SK-N-SH (cell line): ENCODE measurements at regions of chr7 and their contacts with region 1.

Region 1: DNA sequence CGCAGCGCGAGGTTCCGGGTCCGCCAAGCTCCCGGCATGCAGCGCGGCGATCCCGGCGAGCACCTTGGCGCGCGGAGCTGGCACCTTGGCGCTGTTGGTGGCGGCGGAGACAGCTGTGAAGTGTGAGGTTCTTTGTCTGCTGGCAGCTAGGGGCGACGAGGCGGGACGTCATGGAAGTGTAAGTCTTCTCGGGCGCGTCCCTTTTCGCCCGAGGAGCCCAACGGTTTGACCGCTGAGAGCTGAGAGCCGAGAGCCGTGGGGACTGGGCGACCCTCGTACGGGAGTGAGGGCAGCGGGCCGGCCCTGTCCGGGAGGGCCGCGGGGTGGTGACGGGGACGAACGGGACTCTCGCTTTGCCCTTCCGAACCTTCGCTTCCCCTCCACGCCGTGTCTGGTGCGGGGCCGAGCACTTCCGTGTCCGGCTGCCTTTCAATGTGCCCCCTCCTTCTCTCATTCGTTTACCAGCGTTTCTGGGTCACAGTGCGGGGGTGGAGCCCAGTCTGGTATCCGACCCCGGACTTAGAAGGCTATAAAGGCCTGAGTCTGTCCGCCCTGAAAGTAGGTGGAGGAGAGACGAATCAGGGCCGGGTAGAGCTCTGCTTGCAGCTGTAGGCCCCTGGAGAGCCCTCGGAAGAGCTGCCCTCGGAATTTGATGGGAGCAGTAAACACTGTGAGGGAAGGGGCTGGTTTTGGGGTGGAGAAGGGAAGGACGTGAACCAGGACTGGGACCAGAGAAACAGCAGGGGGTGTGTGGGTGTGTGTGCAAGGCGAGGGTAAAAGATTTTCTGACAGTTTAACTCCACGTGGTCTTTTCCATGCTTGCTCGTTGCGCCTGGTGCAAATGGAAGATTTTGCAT is at the start of gene CRCP:
- DNase-seq: peak; percentile 95
- H3K4me3 ChIP-seq: peak within 1 kb of the TSS; percentile 64 to 80
- H3K27ac ChIP-seq: peak within 1 kb of the TSS; percentile 88 to 93
- H3K4me1 ChIP-seq: peaks cover 18 to 21% of the 10 kb centered on the region in 2 experiments; a peak in 2 of 4 replicates
- H3K27me3 ChIP-seq: no peaks in the 10 kb centered on the region
- CTCF ChIP-seq: peak; percentile 62
- EP300 ChIP-seq: no peak
- RAD21 ChIP-seq: peak; percentile 42; the same call in 1 of the 2 replicates
- polyA plus RNA-seq, gene CRCP: 34.0 and 34.1 TPM in 2 replicates

Region 2: DNA sequence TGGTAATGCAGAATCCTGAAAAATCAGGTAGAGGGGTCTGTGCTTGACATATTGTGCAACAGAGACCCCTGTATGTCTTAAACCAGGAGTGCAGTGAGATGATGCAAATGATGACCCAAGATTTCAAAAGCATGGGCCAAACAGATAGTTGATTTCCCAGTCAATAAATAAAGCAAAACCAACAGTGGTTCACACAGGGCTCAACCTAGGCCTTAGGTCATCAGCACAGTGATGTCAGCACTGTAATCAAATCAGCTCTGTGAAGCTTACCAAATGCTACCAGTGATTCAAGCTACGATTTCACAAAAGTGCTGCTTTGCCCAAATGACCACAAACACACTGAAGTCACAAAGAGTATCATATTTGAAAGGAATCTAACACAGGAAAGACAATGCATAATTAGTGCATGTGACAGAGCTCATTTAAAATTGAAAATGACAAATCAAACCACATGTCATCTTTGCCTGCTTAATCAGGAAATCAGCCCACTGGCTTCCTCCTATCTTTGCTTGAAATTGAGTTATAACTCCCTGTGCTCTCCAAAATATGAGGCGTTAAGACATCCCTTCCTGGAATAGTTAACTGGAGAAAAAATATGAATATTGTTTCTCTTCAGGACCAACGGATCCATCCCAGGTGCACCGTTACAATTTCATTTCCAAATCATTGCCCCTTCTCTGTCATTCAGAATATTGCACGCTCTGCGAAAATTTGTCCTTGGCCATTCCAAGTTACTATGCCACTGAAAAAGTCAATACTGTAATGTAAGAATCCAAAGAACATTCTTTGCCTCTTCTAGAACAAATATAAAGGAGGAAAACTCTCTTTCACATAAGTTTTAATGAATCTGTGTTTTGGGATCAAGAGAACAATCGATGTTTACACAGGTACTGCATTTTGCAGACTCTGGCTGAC is 81.3 kb before region 1 on chr7:
- CTCF ChIA-PET with region 1: interaction called, 10 read pairs
- POLR2A ChIA-PET with region 1: interaction called, 4 read pairs
- DNase-seq: peak; percentile 60
- H3K4me3 ChIP-seq: no peak overlapping the region
- H3K27ac ChIP-seq: peak overlapping the region; percentile 56 to 96
- H3K4me1 ChIP-seq: peaks cover 4 to 21% of the 10 kb centered on the region in 2 experiments; a peak in 3 of 4 replicates
- H3K27me3 ChIP-seq: no peaks in the 10 kb centered on the region
- CTCF ChIP-seq: no peak
- EP300 ChIP-seq: peak; percentile 25 to 94; a peak in 2 of 4 replicates
- RAD21 ChIP-seq: peak; percentile 24; the same call in 1 of the 2 replicates